ENCODE measurements at regions of chr16 and their contacts with region 1.

Region 1: DNA sequence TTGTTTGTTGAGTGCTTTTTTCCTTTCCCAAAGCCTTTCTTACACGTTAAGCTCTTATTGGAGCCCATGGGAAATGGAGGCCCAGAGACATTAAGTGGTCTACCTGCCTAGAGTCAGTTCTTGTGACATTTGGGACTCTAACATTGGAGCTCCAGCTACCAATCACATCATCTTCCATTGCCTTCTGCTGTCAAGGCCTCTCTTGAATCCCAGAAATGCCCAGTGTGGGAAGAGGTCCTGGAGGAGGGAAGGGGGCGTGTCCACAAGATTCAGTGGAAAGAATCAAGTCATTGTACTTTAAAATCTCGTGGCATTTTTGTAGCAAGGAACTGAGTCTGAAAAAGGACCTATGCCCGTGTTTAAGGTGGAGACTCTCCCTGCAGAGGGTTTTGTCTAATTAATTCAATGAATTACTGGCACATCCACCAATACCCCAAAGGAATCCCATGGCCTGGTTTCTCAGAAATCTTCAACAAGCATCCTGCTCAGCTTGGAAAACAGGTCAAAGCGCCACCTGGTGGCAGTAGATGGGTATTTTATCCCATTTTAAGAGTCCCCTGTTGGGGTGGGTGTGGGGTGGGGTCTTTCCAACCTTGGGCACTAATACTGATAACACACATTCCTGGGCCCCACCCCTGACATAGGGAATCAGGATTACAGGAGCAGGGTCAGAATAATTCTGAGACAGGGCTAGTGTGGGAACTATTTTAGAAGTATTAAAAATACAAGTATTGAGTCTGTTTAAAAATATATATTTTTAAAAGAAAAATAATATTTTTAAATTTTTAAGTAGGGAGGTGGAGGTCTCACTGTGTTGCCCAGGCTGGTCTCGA is 24.6 kb downstream of the GPT2 start:
- DNase-seq: no peak
- ATAC-seq: peak; percentile 70

Region 2: DNA sequence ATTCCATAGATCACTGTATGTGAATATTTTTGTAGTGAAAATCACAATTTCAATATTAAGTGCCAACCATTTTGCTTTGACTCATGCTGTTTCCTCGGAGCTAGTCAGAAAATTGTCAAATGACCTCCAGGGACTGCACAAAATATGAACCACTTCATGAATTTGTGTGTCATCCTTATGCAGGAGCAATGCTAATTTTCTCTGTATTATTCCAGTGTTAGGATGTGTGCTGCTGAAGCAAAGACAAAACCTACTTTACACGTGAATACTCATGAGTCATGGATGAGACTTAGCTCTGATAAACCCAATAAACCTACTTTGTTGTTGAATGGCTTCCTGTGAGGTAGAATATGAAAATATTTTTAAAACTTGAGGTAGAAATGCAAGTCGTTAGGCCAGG is 352.8 kb before region 1 on chr16:
- intact Hi-C with region 1: no loop called
- DNase-seq: no peak
- ATAC-seq: no peak

Region 3: GRCh38 chr16:46853713-46854443 is 54.9 kb before region 1 on chr16:
- intact Hi-C with region 1: loop called (anchors 2 kb)
- DNase-seq: peak; percentile 83
- ATAC-seq: peak; percentile 85

Measured in left ventricle myocardium superior (tissue), 1 donor.